ENCODE measurements at regions of chr1 and their contacts with region 1.

Region 1: GRCh38 chr1:203267347-203267846 is 37.9 kb upstream of the BTG2 start:
- DNase-seq: peak; percentile 90
- H3K4me3 Mint-ChIP-seq: peak overlapping the region; percentile 72
- H3K27ac Mint-ChIP-seq: peak overlapping the region; percentile 19
- H3K4me1 Mint-ChIP-seq: peaks cover 24% of the 10 kb centered on the region
- H3K27me3 Mint-ChIP-seq: peaks cover 10% of the 10 kb centered on the region

Region 2: GRCh38 chr1:203038891-203039608 is 228.3 kb before region 1 on chr1:
- CTCF ChIA-PET with region 1: interaction called, 48 read pairs
- DNase-seq: peak; percentile 77
- H3K4me3 Mint-ChIP-seq: no peak overlapping the region
- H3K27ac Mint-ChIP-seq: no peak overlapping the region
- H3K4me1 Mint-ChIP-seq: peaks cover 9% of the 10 kb centered on the region
- H3K27me3 Mint-ChIP-seq: peaks cover 16% of the 10 kb centered on the region

Region 3: DNA sequence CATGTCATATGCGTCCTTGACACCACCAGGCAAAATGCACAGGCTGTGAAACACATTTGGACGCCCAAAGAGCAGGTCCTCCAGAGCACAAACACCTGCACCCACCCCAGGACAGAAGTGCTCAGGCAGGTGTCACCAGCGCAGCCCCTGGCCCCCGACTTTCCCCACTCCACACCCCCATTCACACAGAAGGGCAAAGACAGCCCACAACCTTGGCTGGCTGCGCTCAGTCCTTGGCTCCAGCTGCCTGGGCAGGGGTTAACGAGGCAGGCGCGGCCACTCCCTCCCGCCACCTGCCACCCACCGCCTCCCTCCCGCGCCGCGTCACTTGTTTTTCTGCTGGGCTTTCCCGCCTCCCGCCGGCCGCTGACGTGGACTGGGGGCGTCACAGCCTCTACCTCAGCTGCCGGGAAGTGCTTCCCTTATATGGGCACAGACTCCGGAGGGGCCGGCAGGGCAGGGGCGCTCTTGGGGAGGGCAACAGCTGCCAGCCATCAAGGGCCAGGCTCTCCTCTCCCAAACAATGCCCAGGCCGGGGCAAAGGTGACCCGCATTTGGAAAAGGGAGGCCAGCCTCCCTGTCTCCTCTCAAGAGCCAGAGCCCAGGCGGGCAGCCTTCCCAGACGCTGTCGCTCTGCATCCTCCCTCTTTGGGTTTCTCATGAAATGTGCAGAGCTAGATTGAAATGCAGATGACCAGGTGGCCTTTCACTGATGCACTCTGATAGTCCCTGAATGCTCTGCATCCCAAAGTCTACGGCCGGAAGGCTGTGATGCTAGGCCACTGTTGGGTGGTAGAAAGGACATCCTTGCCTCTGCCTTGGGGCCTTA is 23.1 kb after region 1 on chr1:
- CTCF ChIA-PET with region 1: interaction called, 25 read pairs
- DNase-seq: peak; percentile 99
- H3K4me3 Mint-ChIP-seq: peak overlapping the region; percentile 76
- H3K27ac Mint-ChIP-seq: peak overlapping the region; percentile 100
- H3K4me1 Mint-ChIP-seq: peaks cover 80% of the 10 kb centered on the region
- H3K27me3 Mint-ChIP-seq: no peaks in the 10 kb centered on the region

Region 4: GRCh38 chr1:203354246-203354645 is 86.8 kb after region 1 on chr1:
- CTCF ChIA-PET with region 1: interaction called, 591 read pairs
- DNase-seq: no peak
- H3K4me3 Mint-ChIP-seq: no peak overlapping the region
- H3K27ac Mint-ChIP-seq: no peak overlapping the region
- H3K4me1 Mint-ChIP-seq: peaks cover 5% of the 10 kb centered on the region
- H3K27me3 Mint-ChIP-seq: peaks cover 69% of the 10 kb centered on the region

Region 5: DNA sequence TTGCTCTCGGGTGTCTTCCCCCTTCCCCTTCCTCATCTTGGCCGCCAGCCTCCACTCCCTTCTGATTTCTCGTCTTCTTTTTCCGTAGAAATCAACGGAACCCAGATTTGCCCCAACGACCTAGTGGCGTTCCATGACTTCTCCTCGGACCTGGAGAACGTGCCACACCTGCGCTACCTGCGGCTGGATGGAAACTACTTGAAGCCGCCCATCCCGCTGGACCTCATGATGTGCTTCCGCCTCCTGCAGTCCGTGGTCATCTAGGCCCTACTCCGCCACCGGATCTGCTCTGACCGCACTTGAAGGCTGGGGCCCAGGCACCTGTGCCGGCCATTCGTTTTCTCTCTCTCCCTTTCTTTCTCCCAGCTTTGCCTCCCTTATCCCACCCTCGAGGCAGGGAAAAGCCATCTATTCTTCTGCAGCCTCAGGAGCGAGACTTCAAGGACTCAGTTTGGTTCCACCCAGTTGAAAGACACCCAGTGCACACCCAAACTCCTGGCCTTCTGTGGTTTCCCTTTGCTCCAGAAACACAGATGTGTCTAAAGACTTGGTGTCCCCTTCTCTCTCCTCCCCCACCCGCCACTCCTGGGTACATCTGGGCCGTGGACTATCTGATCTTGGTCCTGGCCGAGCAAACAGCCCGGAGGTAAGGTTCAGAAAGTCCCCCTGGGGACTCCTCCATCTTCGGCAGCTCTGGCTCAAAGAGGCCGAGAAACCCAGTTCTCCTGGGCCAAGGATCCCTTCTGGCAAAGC is 219.4 kb after region 1 on chr1:
- CTCF ChIA-PET with region 1: interaction called, 134 read pairs
- DNase-seq: no peak
- H3K4me3 Mint-ChIP-seq: peak overlapping the region; percentile 61
- H3K27ac Mint-ChIP-seq: no peak overlapping the region
- H3K4me1 Mint-ChIP-seq: peaks cover 6% of the 10 kb centered on the region
- H3K27me3 Mint-ChIP-seq: peaks cover 16% of the 10 kb centered on the region

Region 6: DNA sequence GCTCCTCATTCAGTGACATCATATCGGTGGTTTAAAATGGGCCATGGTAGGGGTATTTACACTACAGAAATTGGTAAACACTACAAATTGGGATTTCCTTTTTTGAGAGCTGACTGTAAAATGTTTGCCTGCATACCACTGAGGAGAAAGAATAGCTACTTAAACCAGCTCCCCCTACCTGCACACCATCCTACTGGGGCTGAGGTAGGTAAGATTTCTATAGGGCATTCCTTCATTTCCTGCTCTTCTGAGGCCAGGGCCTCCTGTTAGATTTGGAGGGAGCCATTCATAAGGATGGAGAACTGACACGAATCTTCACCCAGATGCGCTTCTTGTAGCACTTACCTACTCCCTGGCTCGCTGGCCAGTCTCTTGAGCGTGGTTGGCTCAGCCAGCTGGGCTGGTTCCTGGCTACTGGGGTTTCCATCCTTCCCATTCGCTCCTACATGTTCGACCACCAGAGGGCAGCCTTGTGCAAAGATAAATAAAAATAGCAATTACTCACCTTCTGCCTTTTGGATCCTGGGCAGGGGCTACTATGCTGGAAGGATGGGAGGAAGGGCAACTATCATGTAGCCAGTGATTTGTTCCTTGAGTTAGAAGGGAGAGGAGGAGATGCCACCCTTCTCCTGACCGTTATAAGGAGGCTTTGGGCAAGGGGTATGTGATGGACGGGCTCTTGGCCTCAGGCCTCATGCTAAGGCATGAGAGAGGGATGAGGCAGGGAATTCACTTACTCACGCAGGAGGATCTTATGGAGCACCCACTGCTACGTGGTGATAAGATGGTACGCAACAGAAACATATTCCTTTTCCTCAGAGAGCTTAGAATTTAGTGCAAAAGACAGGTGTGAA is 237.2 kb after region 1 on chr1:
- CTCF ChIA-PET with region 1: interaction called, 14 read pairs
- DNase-seq: peak; percentile 85
- H3K4me3 Mint-ChIP-seq: no peak overlapping the region
- H3K27ac Mint-ChIP-seq: no peak overlapping the region
- H3K4me1 Mint-ChIP-seq: no peaks in the 10 kb centered on the region
- H3K27me3 Mint-ChIP-seq: peaks cover 29% of the 10 kb centered on the region

Measured in activated naive CD4-positive, alpha-beta T cell treated with anti-CD3 and anti-CD28 coated beads, Interleukin-2, amount 10 ng/mL, durations not matched to agents 7 days and 5 days (primary cell).